Sigmoid colon (tissue), 7 donors: ENCODE measurements at regions of chr10 and their contacts with region 1.

Region 1: GRCh38 chr10:118568327-118568848 is 27.1 kb downstream of the PRLHR start:
- DNase-seq: no peak
- H3K4me3 ChIP-seq: peak overlapping the region in 2 of 4 donors; percentile 20 to 26
- H3K27ac ChIP-seq: peak overlapping the region in 3 of 4 donors; percentile 65 to 82 (median 76)
- H3K4me1 ChIP-seq: peaks cover 0 to 56% (median 54%) of the 10 kb centered on the region in 4 donors
- H3K27me3 ChIP-seq: no peaks in the 10 kb centered on the region
- CTCF ChIP-seq: peak; percentile 70 to 90 (median 81)
- EP300 ChIP-seq: no peak
- POLR2A ChIP-seq: no peak

Region 2: DNA sequence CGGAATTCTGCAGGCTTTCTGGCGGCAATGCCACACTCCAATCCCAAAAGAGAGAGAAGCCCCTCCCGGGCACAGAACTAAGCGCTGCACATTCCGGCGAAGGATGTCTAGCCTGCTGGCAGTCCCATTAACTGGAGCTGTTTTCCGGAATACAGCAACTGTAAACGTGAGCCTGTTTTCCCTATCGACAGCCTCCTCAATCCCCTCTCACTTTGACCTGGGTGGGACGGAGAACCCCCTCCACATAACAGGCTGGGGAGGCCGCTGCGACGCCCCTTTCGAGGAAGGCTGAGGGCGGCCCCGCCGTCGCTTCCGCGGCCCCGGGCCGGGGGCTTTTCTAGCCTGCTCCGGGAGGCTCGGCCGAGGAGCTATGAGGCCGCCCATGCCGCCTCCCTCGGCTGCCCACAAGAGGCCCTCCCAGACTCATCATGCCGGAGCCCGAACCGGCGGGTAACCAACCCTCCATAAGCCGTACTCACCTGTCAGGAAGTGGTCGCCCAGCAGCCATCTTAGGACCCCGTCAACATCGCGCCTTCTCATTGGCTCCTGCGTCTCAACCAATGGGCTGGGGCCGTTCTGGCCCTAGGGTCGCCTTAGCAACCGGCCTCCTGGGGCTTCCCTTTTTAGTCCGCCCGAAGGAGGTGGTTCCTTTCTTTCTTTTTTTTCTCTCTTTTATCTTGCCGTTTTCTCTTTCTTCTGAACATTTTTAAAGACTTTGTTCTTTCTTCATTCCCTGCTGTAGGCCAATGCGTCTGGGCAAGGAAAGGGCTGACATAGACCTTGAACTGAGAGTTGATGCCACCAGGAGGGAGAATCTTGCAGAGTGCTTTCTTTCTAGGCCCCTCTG is 226.4 kb before region 1 on chr10 and contains the start of gene FAM204A:
- intact Hi-C with region 1: loop called (anchors 5 kb)
- DNase-seq: peak; percentile 96
- H3K4me3 ChIP-seq: peak within 1 kb of the TSS; percentile 86 to 98 (median 92)
- H3K27ac ChIP-seq: peak within 1 kb of the TSS; percentile 78 to 84 (median 80)
- H3K4me1 ChIP-seq: peaks cover 0 to 24% (median 15%) of the 10 kb centered on the region in 4 donors
- H3K27me3 ChIP-seq: no peaks in the 10 kb centered on the region
- CTCF ChIP-seq: no peak
- EP300 ChIP-seq: no peak
- POLR2A ChIP-seq: peak in 1 of 2 donors; percentile 31
- total RNA-seq, gene FAM204A: 45.1 to 83.1 (median 73.7) TPM

Region 3: DNA sequence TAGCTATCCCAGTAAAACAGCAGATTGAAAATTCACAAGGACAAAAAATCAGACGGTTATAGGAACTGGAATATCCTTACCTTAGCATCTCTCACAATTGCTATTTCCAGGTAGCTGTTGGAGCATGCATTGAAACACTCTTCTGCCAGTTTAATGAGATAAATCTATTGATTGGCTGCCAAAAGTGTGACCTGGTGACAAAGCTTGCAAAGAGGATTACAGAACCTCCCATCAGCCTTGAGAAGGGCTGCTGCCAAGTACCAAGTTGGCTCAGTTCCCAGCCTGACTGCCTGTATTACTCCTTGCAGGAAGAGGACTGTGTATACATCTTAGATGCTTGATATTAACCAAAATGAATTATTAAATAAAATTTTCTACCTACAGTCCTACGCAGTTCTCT is 21.9 kb after region 1 on chr10:
- intact Hi-C with region 1: no loop called
- DNase-seq: no peak
- H3K4me3 ChIP-seq: no peak overlapping the region
- H3K27ac ChIP-seq: no peak overlapping the region
- H3K4me1 ChIP-seq: peaks cover 0 to 6% (median 2%) of the 10 kb centered on the region in 4 donors
- H3K27me3 ChIP-seq: peaks cover 13 to 31% (median 17%) of the 10 kb centered on the region in 3 donors
- CTCF ChIP-seq: no peak
- EP300 ChIP-seq: no peak
- POLR2A ChIP-seq: no peak

Region 4: DNA sequence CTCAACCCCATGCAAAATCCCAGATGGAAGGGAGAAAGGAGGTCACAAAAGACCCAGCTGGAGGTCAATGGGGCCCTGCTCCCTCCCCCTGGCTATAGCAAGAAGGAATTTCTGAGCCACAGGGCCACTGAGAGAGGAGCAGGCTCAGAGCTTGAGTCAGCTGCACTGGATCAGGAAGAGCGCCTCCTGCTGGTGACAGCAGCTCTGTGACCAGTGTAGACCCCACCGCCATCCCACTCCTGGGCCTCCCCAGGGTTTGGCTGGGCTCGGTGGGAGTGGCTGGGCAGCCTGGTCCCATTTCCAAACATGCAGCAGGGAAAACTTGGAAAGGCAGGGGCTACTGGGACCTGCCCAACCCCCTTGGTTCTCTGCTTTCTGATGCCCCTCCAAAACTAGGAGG is 58.6 kb after region 1 on chr10:
- intact Hi-C with region 1: loop called (anchors 5 kb)
- DNase-seq: no peak
- H3K4me3 ChIP-seq: no peak overlapping the region
- H3K27ac ChIP-seq: no peak overlapping the region
- H3K4me1 ChIP-seq: peaks cover 0 to 21% (median 20%) of the 10 kb centered on the region in 4 donors
- H3K27me3 ChIP-seq: no peaks in the 10 kb centered on the region
- CTCF ChIP-seq: no peak
- EP300 ChIP-seq: no peak
- POLR2A ChIP-seq: no peak

Region 5: GRCh38 chr10:118720685-118721538 is 152.5 kb after region 1 on chr10:
- intact Hi-C with region 1: loop called (anchors 1 kb)
- DNase-seq: no peak
- H3K4me3 ChIP-seq: no peak overlapping the region
- H3K27ac ChIP-seq: no peak overlapping the region
- H3K4me1 ChIP-seq: peaks cover 0 to 26% (median 21%) of the 10 kb centered on the region in 4 donors
- H3K27me3 ChIP-seq: no peaks in the 10 kb centered on the region
- CTCF ChIP-seq: peak; percentile 63 to 87 (median 83)
- EP300 ChIP-seq: no peak
- POLR2A ChIP-seq: no peak

Region 6: DNA sequence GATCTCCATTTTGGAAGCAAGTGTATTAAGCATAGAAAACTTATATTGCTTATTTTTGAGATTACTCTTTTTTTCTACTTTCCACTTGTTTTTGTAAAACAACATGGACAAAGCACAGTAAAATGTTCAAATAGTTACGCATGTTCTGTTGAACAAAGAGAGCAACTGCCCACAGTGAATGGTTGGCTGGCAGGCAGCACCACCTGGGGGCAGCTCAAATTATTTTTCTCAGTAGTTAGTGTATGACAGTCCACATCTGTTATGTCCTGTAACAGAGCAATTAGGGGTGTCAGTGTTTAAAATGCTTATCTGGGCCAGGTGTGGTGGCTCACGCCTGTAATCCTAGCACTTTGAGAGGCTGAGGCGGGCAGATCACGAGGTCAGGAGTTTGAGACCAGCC is 232.5 kb after region 1 on chr10:
- intact Hi-C with region 1: loop called (anchors 2 kb)
- DNase-seq: no peak
- H3K4me3 ChIP-seq: no peak overlapping the region
- H3K27ac ChIP-seq: no peak overlapping the region
- H3K4me1 ChIP-seq: peaks cover 0 to 23% (median 11%) of the 10 kb centered on the region in 4 donors
- H3K27me3 ChIP-seq: no peaks in the 10 kb centered on the region
- CTCF ChIP-seq: peak; percentile 26 to 59 (median 39)
- EP300 ChIP-seq: no peak
- POLR2A ChIP-seq: no peak

Region 7: DNA sequence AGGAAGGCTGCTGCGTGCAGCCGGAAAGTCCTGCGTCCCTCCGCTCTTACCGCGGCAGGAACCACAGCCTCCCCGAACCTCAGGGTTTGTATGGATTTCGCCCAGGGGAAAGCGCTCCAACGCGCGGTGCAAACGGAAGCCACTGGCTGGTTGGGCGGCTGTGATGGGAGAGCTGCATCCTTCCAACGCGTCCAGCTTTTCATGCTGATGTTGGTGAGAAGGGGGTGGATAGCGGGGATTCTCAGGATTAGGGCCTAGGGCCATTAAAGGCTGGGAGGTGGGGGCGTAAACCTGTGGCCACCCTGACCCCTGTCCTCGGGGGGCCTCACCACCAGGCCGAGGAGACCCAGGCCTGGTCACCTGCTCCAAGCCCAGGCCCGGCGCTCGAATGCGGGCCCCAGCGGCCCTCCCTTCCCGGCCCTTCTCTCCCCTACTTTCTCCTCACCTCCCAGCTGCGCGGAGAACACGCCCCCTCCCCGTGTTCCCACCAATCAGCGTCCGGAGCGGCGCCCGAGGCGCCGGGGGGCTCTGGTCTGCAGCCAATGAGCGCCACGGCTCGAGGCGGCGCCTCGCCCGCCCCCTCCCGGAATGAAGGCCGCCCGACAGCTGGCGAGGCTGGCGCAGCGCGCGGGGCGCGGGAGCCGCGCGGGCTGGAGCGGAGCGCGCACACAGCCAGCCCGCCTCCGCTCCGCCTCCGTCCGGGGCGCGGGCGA is 460.7 kb after region 1 on chr10:
- intact Hi-C with region 1: loop called (anchors 5 kb)
- DNase-seq: peak; percentile 95
- H3K4me3 ChIP-seq: peak overlapping the region; percentile 21 to 77 (median 69)
- H3K27ac ChIP-seq: peak overlapping the region; percentile 76 to 89 (median 82)
- H3K4me1 ChIP-seq: peaks cover 0 to 54% (median 50%) of the 10 kb centered on the region in 4 donors
- H3K27me3 ChIP-seq: no peaks in the 10 kb centered on the region
- CTCF ChIP-seq: no peak
- EP300 ChIP-seq: no peak
- POLR2A ChIP-seq: no peak

Region 8: GRCh38 chr10:119341459-119342301 is 773.3 kb after region 1 on chr10:
- intact Hi-C with region 1: no loop called
- DNase-seq: peak; percentile 89
- H3K4me3 ChIP-seq: no peak overlapping the region
- H3K27ac ChIP-seq: peak overlapping the region; percentile 55 to 79 (median 68)
- H3K4me1 ChIP-seq: peaks cover 0 to 57% (median 53%) of the 10 kb centered on the region in 4 donors
- H3K27me3 ChIP-seq: no peaks in the 10 kb centered on the region
- CTCF ChIP-seq: no peak
- EP300 ChIP-seq: no peak
- POLR2A ChIP-seq: no peak